CD4-positive, alpha-beta T cell (primary cell): ENCODE measurements at regions of chr10 and their contacts with region 1.

Region 1: DNA sequence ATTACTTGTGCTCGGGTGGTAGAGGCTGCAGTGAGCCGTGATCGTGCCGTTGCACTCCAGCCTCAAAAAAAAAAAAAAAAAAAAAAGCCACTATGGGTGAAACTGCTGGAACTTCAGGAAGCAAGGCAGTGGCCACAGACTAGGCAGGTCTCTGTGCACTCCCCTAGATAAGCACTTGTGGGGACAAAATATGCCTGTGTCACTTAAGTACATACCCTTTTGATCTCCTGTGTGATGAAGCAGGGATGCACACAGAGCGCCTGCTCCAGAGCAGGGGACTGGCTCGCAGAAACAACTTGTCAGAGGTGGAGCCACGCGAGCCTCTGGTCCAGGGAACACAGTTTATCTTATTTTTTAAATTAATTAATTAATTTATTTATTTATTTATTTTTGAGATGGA is 42.9 kb upstream of the PSAP start:
- DNase-seq: no peak
- ATAC-seq: no peak
- H3K4me3 ChIP-seq: no peak overlapping the region
- H3K4me3 Mint-ChIP-seq: no peak overlapping the region
- H3K27ac ChIP-seq: no peak overlapping the region
- H3K27ac Mint-ChIP-seq: no peak overlapping the region
- H3K4me1 ChIP-seq: peaks cover 14% of the 10 kb centered on the region
- H3K4me1 Mint-ChIP-seq: peaks cover 21% of the 10 kb centered on the region
- H3K27me3 ChIP-seq: no peaks in the 10 kb centered on the region
- H3K27me3 Mint-ChIP-seq: no peaks in the 10 kb centered on the region
- CTCF ChIP-seq: no peak

Region 2: DNA sequence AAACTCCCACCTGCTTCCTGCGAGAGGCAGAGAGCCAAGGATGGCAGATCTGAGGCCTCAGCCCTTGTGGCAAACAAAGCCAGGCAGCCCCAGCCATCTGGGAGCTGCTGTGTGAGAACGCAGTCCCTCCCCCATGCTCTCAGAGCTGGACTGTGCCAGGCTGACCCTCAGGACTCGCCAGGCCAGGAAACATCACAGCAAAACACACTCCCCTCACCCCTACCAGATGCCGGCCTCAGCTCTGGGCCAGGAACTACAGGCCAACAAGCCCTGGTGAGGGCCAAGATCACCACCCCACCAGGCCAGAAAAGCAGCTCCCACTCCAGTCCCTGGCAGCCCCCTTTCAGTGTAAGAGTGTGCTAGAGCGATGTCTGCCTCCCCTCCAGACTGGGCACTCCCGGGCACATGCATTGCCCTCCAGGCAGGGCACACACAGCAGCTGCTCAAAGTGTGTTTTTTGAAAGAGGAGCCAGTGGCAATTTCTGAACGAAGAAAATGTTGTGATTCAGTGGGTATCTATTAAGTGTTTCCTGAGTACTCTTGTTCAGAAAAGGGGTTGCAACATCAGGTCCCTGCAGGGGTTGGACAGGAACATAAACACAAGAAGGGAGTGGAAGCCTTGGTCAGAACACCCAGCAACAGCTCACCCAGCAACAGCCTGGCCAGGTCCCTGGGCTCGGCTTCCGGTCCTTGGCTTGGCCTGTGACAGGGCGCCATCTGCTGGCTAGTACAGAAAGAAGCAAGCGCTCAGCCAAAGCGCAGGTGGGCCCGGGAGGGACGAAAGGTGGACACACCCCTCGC is 1529.7 kb before region 1 on chr10:
- CTCF ChIA-PET with region 1: no interaction called
- POLR2A ChIA-PET with region 1: no interaction called
- intact Hi-C with region 1: no loop called
- DNase-seq: peak; percentile 72 to 91 (median 78)
- ATAC-seq: peak; percentile 98
- H3K4me3 ChIP-seq: no peak overlapping the region
- H3K4me3 Mint-ChIP-seq: no peak overlapping the region
- H3K27ac ChIP-seq: no peak overlapping the region
- H3K27ac Mint-ChIP-seq: no peak overlapping the region
- H3K4me1 ChIP-seq: peaks cover 13% of the 10 kb centered on the region
- H3K4me1 Mint-ChIP-seq: peaks cover 9% of the 10 kb centered on the region
- H3K27me3 ChIP-seq: no peaks in the 10 kb centered on the region
- H3K27me3 Mint-ChIP-seq: no peaks in the 10 kb centered on the region
- CTCF ChIP-seq: peak; percentile 89

Region 3: DNA sequence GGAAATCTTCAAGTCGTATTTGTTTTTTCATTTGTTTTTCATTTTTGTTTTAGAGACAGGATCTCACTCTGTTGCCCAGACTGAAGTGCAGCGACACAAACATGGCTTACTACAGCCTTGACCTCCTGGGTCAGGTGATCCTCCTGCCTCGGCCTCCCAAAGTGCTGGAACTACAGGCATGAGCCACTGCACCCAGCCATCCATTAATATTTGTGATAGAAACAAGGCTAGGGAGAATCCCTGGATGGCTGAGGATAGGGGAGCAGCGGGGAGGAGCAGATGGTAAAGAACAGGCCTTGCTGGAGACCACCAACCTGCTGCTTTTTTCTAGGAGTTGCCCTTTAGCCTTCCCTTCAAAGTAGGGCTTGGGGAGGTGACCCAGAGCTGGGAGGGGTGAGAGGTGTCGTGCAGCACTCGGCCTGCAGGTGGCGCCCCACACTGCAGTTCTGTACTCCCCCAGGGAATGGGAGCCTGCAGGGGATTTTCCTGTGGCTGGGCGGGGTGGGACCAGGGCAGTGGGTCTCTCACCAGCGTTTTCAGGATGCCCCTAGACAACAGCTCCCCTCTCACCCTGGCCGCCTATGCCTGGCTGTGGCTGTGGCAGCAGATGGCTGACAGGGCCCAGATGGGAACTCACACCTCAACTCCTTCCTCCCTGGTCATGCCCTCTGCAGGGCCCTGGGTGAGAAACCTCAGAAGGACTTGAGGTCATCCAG is 509.8 kb before region 1 on chr10:
- CTCF ChIA-PET with region 1: no interaction called
- POLR2A ChIA-PET with region 1: no interaction called
- intact Hi-C with region 1: loop called in 1 of 2 experiments (anchors 1 kb)
- DNase-seq: peak; percentile 52 to 84 (median 67)
- ATAC-seq: peak; percentile 96
- H3K4me3 ChIP-seq: no peak overlapping the region
- H3K4me3 Mint-ChIP-seq: no peak overlapping the region
- H3K27ac ChIP-seq: no peak overlapping the region
- H3K27ac Mint-ChIP-seq: no peak overlapping the region
- H3K4me1 ChIP-seq: peaks cover 5% of the 10 kb centered on the region
- H3K4me1 Mint-ChIP-seq: no peaks in the 10 kb centered on the region
- H3K27me3 ChIP-seq: no peaks in the 10 kb centered on the region
- H3K27me3 Mint-ChIP-seq: no peaks in the 10 kb centered on the region
- CTCF ChIP-seq: peak; percentile 90

Region 4: DNA sequence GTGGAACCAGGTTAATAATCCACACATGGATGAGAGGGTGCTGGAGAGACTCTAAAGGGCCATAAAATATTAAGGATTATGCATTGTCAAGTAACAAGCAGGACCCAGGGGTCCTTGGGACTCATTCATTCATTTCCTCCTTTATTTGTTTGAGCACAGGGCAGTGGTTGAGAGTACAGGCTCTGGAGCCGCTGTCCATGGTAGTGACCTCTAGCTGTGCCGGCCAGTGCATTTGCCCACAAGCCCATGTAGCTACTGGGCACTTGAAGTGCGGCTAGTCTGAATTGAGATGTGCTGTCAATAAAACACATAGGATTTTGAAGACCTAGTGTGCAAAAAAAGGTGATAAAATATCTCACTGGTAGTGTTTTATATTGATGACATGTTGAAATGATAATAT is 311.9 kb before region 1 on chr10:
- CTCF ChIA-PET with region 1: no interaction called
- POLR2A ChIA-PET with region 1: no interaction called
- intact Hi-C with region 1: no loop called
- DNase-seq: no peak
- ATAC-seq: no peak
- H3K4me3 ChIP-seq: no peak overlapping the region
- H3K4me3 Mint-ChIP-seq: no peak overlapping the region
- H3K27ac ChIP-seq: no peak overlapping the region
- H3K27ac Mint-ChIP-seq: no peak overlapping the region
- H3K4me1 ChIP-seq: no peaks in the 10 kb centered on the region
- H3K4me1 Mint-ChIP-seq: no peaks in the 10 kb centered on the region
- H3K27me3 ChIP-seq: peaks cover 0 to 4% of the 10 kb centered on the region in 2 experiments
- H3K27me3 Mint-ChIP-seq: no peaks in the 10 kb centered on the region
- CTCF ChIP-seq: no peak

Region 5: DNA sequence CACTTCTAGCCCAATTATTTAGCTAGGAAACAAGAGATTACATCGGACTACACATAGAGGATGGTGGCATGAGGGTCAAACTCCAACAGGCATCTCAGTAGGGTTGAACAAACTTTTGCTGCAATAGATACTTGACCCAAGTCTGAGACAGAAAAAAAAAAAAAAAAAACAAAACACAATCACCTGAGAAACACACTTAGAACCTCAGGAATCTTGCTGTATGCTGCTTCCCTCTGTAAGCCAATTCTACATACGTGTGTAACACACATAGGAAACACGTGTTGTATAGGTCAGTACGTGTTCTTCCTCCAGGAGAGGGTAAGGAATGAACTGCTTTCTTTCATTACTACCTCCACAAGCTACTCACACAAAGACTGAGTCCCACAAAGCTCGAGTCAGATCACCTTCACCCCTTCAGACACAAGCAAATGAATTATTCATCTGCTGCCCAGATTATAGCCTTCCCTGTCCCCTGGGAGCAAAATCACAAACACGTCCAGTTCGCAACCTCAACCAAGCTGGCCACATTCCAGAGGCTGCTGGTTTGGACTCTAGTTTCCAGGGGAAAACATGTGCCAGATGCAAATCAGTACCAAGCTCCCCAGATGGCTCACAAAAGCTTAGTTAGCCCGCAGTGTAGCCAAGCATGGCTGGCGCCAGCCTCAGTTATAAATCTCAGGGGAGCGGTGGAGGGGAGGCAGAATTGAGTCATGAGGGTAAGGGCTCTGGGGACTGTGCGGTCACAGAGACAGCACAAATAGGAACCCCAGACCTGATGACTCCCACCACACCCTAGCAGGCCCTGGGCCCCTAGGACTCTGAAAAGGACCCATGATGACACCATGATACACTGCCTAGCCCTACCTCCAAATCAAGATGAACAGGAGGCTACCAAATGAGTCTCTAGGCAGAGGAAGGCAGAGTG is 58.0 kb before region 1 on chr10:
- CTCF ChIA-PET with region 1: interaction called, 11 read pairs
- POLR2A ChIA-PET with region 1: no interaction called
- intact Hi-C with region 1: loop called (anchors 1 to 2 kb)
- DNase-seq: peak in 1 of 14 experiments; percentile 42
- ATAC-seq: no peak
- H3K4me3 ChIP-seq: no peak overlapping the region
- H3K4me3 Mint-ChIP-seq: no peak overlapping the region
- H3K27ac ChIP-seq: no peak overlapping the region
- H3K27ac Mint-ChIP-seq: peak overlapping the region; percentile 45
- H3K4me1 ChIP-seq: peaks cover 40% of the 10 kb centered on the region
- H3K4me1 Mint-ChIP-seq: peaks cover 52% of the 10 kb centered on the region
- H3K27me3 ChIP-seq: no peaks in the 10 kb centered on the region
- H3K27me3 Mint-ChIP-seq: no peaks in the 10 kb centered on the region
- CTCF ChIP-seq: no peak

Region 6: GRCh38 chr10:71850637-71851464 is 43.1 kb before region 1 on chr10 and contains the start of gene PSAP:
- CTCF ChIA-PET with region 1: interaction called, 3 read pairs
- POLR2A ChIA-PET with region 1: interaction called, 8 read pairs
- intact Hi-C with region 1: loop called in 1 of 2 experiments (anchors 5 kb)
- DNase-seq: peak; percentile 97 to 99 (median 98)
- ATAC-seq: peak; percentile 96
- H3K4me3 ChIP-seq: peak within 1 kb of the TSS; percentile 99
- H3K4me3 Mint-ChIP-seq: peak within 1 kb of the TSS; percentile 96
- H3K27ac ChIP-seq: peak within 1 kb of the TSS; percentile 47 to 85
- H3K27ac Mint-ChIP-seq: peak within 1 kb of the TSS; percentile 85
- H3K4me1 ChIP-seq: peaks cover 33% of the 10 kb centered on the region
- H3K4me1 Mint-ChIP-seq: peaks cover 51% of the 10 kb centered on the region
- H3K27me3 ChIP-seq: no peaks in the 10 kb centered on the region
- H3K27me3 Mint-ChIP-seq: no peaks in the 10 kb centered on the region
- CTCF ChIP-seq: no peak
- total RNA-seq, gene PSAP: 191 to 206 TPM